ENCODE measurements at regions of chr11 and their contacts with region 1.

Region 1: GRCh38 chr11:65013692-65014145 is 241 bp upstream of the ARL2 start:
- DNase-seq: peak; percentile 87
- H3K4me3 Mint-ChIP-seq: peak overlapping the region; percentile 85
- H3K27ac Mint-ChIP-seq: peak overlapping the region; percentile 96
- H3K4me1 Mint-ChIP-seq: peaks cover 27% of the 10 kb centered on the region
- H3K27me3 Mint-ChIP-seq: no peaks in the 10 kb centered on the region

Region 2: DNA sequence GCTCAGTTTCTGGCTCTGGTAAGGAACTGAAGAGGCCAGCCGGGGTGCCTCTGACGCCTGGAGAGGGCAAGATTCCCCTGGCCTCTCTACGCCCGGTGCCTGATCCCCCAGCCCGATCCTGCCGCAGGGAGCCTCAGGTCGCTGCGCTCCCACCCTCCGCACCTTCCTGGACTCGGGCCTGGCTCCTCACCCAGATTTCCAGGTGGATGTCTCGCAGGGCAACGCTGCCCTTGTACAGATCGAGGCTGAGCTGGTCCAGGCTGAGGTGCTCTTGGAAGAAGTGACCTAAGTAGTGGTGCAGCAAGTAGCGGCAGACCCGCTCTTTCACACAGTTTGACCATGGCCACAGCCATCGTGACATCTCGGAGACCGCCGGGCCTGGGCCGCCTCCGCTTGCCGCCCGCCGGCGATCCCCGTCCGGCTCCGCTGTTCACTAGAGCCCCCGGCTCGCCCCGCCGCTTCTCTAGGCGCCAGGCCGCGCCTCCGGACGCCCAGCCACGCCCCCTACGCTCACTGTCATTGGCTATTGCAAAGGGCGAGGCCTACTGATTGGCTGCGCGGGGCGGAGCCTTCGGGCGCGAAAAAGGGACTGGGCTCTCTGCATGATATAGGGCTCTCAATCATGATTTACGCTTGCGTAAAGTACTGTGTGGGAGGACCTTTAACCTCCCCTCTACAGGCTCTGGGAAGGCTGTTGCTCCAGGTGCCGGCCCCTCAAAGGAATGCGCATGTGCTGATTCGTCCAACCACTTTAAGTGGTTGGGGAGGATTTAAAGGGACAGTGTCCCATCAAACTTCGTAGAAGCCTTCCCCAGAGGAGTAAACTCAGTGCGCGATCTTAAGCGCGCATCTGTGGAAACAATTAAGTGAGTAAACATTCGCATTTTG is 96.7 kb before region 1 on chr11 and contains the start of gene ATG2A:
- CTCF ChIA-PET with region 1: no interaction called
- intact Hi-C with region 1: loop called (anchors 1 kb)
- DNase-seq: peak; percentile 99
- H3K4me3 Mint-ChIP-seq: peak within 1 kb of the TSS; percentile 87
- H3K27ac Mint-ChIP-seq: peak within 1 kb of the TSS; percentile 81
- H3K4me1 Mint-ChIP-seq: peaks cover 25% of the 10 kb centered on the region
- H3K27me3 Mint-ChIP-seq: no peaks in the 10 kb centered on the region
- total RNA-seq, gene ATG2A: 15.1 to 16.3 TPM

Region 3: GRCh38 chr11:65027213-65028067 is 13.7 kb after region 1 on chr11 and contains the start of gene SNX15:
- CTCF ChIA-PET with region 1: interaction called, 22 read pairs
- intact Hi-C with region 1: loop called (anchors 1 kb)
- DNase-seq: peak; percentile 95
- H3K4me3 Mint-ChIP-seq: peak within 1 kb of the TSS; percentile 79
- H3K27ac Mint-ChIP-seq: peak within 1 kb of the TSS; percentile 82
- H3K4me1 Mint-ChIP-seq: peaks cover 19% of the 10 kb centered on the region
- H3K27me3 Mint-ChIP-seq: no peaks in the 10 kb centered on the region
- total RNA-seq, gene SNX15: 8.9 to 9.4 TPM

Region 4: DNA sequence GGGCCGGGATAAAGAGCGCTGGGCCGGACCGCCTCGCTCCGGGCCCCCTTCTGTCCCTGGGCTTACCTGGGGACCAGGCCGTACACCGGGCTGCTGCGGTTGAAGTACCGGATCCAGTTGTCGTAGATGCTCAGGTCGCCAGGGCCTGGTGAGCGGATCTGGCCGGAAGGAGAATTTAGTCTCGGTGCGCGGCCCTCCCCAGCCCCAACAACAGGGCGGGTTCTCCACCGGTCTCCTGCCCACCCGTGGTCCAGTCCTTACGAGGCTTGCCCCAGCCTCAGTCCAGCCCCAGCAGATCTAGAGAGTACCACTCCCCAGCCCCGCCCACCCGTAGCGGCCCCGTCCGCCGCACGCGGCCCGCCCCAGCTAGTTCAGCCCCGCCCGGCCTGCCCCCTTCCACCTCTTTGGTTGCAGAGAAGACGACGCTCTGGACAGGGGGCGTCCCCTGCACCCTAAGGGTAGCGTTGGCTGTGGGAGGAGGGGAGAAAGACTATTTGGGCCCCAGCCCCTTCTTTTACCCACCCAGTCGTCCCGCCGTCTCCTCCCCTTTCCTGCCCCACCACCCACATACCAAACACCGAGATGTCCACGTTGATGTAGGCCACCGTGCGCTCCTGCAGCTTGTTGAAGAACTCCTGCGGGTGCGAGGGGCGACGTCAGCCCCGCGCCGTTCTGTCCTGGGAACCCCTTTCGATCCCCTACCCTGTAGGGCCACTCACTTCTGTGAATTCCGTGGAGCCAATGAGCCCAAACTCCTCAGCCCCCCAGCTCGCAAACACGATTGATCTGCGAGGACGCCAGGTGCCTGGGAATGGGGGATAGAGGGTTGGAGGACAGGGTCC is 34.1 kb after region 1 on chr11:
- CTCF ChIA-PET with region 1: no interaction called
- intact Hi-C with region 1: no loop called
- DNase-seq: peak; percentile 24
- H3K4me3 Mint-ChIP-seq: peak overlapping the region; percentile 70
- H3K27ac Mint-ChIP-seq: peak overlapping the region; percentile 18
- H3K4me1 Mint-ChIP-seq: peaks cover 23% of the 10 kb centered on the region
- H3K27me3 Mint-ChIP-seq: no peaks in the 10 kb centered on the region

Region 5: GRCh38 chr11:65083834-65084597 is 70.3 kb after region 1 on chr11 and contains the starts of genes CDCA5 and ZFPL1:
- CTCF ChIA-PET with region 1: interaction called, 12 read pairs
- intact Hi-C with region 1: loop called (anchors 1 kb)
- DNase-seq: peak; percentile 97
- H3K4me3 Mint-ChIP-seq: peak within 1 kb of the TSS; percentile 92
- H3K27ac Mint-ChIP-seq: peak within 1 kb of the TSS; percentile 97
- H3K4me1 Mint-ChIP-seq: peaks cover 39% of the 10 kb centered on the region
- H3K27me3 Mint-ChIP-seq: no peaks in the 10 kb centered on the region
- total RNA-seq, gene CDCA5: 169 to 174 TPM
- total RNA-seq, gene ZFPL1: 24.2 to 25.6 TPM

Region 6: GRCh38 chr11:65261591-65262380 is 248.1 kb after region 1 on chr11 and contains the start of gene POLA2:
- CTCF ChIA-PET with region 1: interaction called, 4 read pairs
- intact Hi-C with region 1: loop called (anchors 5 kb)
- DNase-seq: peak; percentile 98
- H3K4me3 Mint-ChIP-seq: peak within 1 kb of the TSS; percentile 93
- H3K27ac Mint-ChIP-seq: peak within 1 kb of the TSS; percentile 94
- H3K4me1 Mint-ChIP-seq: peaks cover 44% of the 10 kb centered on the region
- H3K27me3 Mint-ChIP-seq: no peaks in the 10 kb centered on the region
- total RNA-seq, gene POLA2: 65.1 to 67.0 TPM